Activated naive CD4-positive, alpha-beta T cell treated with anti-CD3 and anti-CD28 coated beads, Interleukin-2, amount 10 ng/mL, durations not matched to agents 7 days and 5 days (primary cell): ENCODE measurements at regions of chr16 and their contacts with region 1.

Region 1: GRCh38 chr16:15682105-15682570 is 32.1 kb downstream of the NDE1 start:
- DNase-seq: peak; percentile 54
- H3K4me3 Mint-ChIP-seq: no peak overlapping the region
- H3K27ac Mint-ChIP-seq: peak overlapping the region; percentile 65
- H3K4me1 Mint-ChIP-seq: peaks cover 5% of the 10 kb centered on the region
- H3K27me3 Mint-ChIP-seq: no peaks in the 10 kb centered on the region

Region 2: DNA sequence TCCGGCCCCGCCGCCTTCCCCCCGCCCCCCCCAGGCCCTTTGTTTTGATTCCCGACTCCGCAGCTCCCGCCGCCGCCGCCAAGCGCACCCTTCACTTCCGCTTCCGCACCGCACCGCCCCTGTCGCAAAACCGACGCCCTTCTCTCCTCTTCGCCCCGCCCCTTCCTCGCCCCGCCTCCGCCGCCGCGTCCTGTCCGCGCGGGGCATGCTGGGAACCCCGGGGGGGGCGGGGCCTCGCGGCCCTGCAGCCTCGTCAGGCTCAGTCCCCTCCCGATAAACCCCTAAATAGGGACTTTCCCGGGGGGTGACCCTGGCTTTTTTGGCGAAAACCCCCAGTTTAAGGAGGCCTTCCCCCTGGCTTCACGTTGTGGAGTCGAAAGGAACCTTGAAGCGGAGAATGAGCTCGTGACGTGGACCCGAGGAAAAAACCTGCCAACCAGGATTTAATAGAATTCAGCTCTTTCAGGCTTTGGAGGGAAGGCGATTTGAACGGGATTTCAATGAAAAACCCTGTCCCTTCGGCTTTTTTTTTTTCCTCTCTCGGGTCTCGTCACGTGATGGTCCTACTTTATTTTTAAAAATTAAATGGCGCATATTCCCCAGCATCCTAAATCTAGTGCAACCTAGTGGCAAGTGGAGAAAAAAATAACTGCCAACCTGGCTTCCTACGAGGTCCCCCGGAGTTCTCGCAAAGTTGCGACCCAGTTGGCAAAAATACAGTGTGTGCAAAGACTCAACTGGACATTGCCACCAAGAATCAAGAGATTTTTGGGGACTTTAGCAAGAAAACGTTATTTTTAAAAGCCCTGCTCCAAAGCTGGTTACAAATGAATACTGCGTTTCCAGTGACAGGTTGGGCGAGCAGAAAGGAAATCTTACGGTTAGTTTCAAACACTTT is 38.8 kb before region 1 on chr16 and contains the start of gene MARF1:
- CTCF ChIA-PET with region 1: interaction called, 14 read pairs
- DNase-seq: peak; percentile 99
- H3K4me3 Mint-ChIP-seq: peak within 1 kb of the TSS; percentile 88
- H3K27ac Mint-ChIP-seq: peak within 1 kb of the TSS; percentile 98
- H3K4me1 Mint-ChIP-seq: peaks cover 60% of the 10 kb centered on the region
- H3K27me3 Mint-ChIP-seq: peaks cover 10% of the 10 kb centered on the region

Region 3: GRCh38 chr16:15708096-15708495 is 26.0 kb after region 1 on chr16:
- CTCF ChIA-PET with region 1: no interaction called
- DNase-seq: no peak
- H3K4me3 Mint-ChIP-seq: no peak overlapping the region
- H3K27ac Mint-ChIP-seq: peak overlapping the region; percentile 72
- H3K4me1 Mint-ChIP-seq: peaks cover 11% of the 10 kb centered on the region
- H3K27me3 Mint-ChIP-seq: no peaks in the 10 kb centered on the region

Region 4: DNA sequence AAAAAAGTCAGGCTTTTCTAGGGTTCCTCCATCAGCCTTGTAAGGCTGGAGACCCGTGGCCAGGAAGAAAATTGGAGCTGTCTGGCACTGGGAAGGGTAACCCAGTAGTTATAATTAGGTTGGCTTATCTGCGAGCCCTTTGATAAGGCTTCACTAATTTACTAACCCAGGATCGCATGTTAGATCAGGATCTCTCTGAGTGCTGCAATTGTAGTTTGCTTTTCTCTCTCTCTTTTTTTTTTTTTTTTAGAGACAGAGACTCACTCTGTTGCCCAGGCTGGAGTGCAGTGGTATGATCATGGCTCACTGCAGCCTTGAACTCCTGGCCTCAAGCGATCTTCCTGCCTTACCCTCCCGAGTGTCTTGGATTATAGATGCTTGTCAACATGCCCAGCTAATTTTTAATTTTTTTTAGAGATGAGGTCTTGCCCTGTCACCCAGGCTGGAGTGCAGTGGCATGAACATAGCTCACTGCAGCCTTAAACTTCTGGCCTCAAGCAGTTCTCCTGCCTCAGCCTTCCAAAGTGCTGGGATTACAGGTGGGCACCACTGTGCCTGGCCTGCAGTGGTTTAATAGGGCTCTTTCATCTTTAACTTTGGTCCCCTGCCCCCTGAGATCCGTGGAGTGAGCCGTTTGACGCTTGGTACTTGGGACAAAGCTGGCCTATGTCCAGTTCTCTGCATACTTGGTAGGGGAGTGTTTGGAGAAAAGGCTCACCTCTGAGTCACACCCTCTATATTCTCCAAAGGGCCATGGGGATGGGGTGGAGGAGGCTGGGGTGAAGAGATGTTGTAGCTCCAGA is 284.5 kb after region 1 on chr16:
- CTCF ChIA-PET with region 1: no interaction called
- DNase-seq: no peak
- H3K4me3 Mint-ChIP-seq: no peak overlapping the region
- H3K27ac Mint-ChIP-seq: peak overlapping the region; percentile 24
- H3K4me1 Mint-ChIP-seq: peaks cover 28% of the 10 kb centered on the region
- H3K27me3 Mint-ChIP-seq: no peaks in the 10 kb centered on the region